CD8-positive, alpha-beta T cell (primary cell): ENCODE measurements at regions of chrX and their contacts with region 1.

Region 1: DNA sequence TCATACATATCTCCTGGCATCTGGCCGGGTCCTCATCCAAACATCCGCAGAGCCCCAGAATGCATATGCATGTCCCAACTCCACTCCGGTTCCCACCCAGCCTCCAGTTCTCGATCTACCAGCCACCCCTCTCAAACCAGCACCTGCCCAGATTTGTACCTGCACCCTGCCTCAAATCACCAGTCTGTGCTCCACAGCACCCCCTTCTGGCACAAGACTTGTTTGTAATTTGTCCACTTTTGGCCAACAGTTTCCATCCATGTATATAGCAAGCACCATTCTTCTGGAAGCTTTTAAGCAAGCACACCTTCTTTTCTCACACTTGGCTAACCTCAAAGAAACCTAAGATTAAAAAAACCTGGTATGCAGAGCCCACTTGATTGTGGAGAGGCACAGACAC is 644.1 kb downstream of the MID1IP1 start:
- DNase-seq: peak in 8 of 9 experiments; percentile 3 to 57 (median 32)
- ATAC-seq: no peak
- H3K4me3 ChIP-seq: no peak overlapping the region
- H3K4me3 Mint-ChIP-seq: no peak overlapping the region
- H3K27ac ChIP-seq: no peak overlapping the region
- H3K27ac Mint-ChIP-seq: no peak overlapping the region
- H3K4me1 ChIP-seq: peaks cover 7% of the 10 kb centered on the region
- H3K4me1 Mint-ChIP-seq: peaks cover 28% of the 10 kb centered on the region
- H3K27me3 ChIP-seq: no peaks in the 10 kb centered on the region
- H3K27me3 Mint-ChIP-seq: no peaks in the 10 kb centered on the region
- CTCF ChIP-seq: peak; percentile 26

Region 2: GRCh38 chrX:39162322-39162735 is 283.0 kb before region 1 on chrX:
- CTCF ChIA-PET with region 1: no interaction called
- POLR2A ChIA-PET with region 1: no interaction called
- intact Hi-C with region 1: loop called in 1 of 2 experiments (anchors 10 kb)
- DNase-seq: peak in 6 of 9 experiments; percentile 17 to 55 (median 46)
- ATAC-seq: peak; percentile 85
- H3K4me3 ChIP-seq: no peak overlapping the region
- H3K4me3 Mint-ChIP-seq: peak overlapping the region; percentile 67
- H3K27ac ChIP-seq: no peak overlapping the region
- H3K27ac Mint-ChIP-seq: no peak overlapping the region
- H3K4me1 ChIP-seq: no peaks in the 10 kb centered on the region
- H3K4me1 Mint-ChIP-seq: peaks cover 4% of the 10 kb centered on the region
- H3K27me3 ChIP-seq: peaks cover 0 to 3% of the 10 kb centered on the region in 2 experiments
- H3K27me3 Mint-ChIP-seq: peaks cover 3% of the 10 kb centered on the region
- CTCF ChIP-seq: peak; percentile 33

Region 3: GRCh38 chrX:39261446-39262147 is 183.7 kb before region 1 on chrX:
- CTCF ChIA-PET with region 1: interaction called, 4 read pairs
- POLR2A ChIA-PET with region 1: no interaction called
- intact Hi-C with region 1: loop called (anchors 1 kb)
- DNase-seq: peak in 3 of 9 experiments; percentile 21 to 62 (median 48)
- ATAC-seq: no peak
- H3K4me3 ChIP-seq: no peak overlapping the region
- H3K4me3 Mint-ChIP-seq: no peak overlapping the region
- H3K27ac ChIP-seq: no peak overlapping the region
- H3K27ac Mint-ChIP-seq: no peak overlapping the region
- H3K4me1 ChIP-seq: no peaks in the 10 kb centered on the region
- H3K4me1 Mint-ChIP-seq: peaks cover 18% of the 10 kb centered on the region
- H3K27me3 ChIP-seq: no peaks in the 10 kb centered on the region
- H3K27me3 Mint-ChIP-seq: no peaks in the 10 kb centered on the region
- CTCF ChIP-seq: peak; percentile 59